ENCODE measurements at regions of chr1 and their contacts with region 1.

Region 1: GRCh38 chr1:203038891-203039608 is 12.8 kb downstream of the PPFIA4 start:
- DNase-seq: peak; percentile 89

Region 2: GRCh38 chr1:202905331-202905730 is 133.7 kb before region 1 on chr1:
- intact Hi-C with region 1: no loop called
- DNase-seq: no peak

Region 3: GRCh38 chr1:203069030-203069747 is 30.1 kb after region 1 on chr1:
- intact Hi-C with region 1: loop called (anchors 2 kb)
- DNase-seq: no peak

Region 4: DNA sequence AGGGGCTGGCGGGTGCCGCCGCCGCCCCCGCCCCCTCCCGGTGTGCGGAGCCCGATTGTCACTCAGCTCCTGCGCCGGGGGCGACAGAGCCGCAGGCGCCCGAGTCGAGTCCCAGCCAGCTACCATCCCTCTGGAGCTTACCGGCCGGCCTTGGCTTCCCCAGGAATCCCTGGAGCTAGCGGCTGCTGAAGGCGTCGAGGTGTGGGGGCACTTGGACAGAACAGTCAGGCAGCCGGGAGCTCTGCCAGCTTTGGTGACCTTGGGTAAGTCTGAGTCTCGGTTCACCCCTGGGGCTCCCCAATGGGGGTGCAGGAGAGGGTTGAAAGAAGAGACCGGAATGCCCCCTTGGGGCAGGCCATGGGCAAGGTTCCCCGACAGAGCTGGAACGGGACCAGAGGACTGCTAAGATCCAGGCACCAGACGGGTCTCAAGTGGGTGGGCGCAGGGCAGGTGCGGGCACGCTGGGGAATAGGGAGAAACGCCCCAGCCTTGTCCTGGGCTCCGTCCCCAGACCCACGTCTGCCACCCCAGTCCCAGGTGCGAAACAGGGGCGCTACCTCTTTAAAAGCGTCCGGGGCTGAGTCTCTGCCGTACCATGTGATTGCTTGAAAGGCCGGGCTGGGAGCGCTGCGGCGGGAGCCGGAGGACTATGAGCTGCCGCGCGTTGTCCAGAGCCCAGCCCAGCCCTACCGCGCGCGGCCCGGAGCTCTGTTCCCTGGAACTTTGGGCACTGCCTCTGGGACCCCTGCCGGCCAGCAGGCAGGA is 88.8 kb after region 1 on chr1 and contains the start of gene ADORA1:
- intact Hi-C with region 1: loop called (anchors 1 kb)
- DNase-seq: peak; percentile 82
- total RNA-seq, gene ADORA1: 12.1 TPM

Region 5: GRCh38 chr1:203172128-203173010 is 133.3 kb after region 1 on chr1:
- intact Hi-C with region 1: loop called (anchors 1 kb)
- DNase-seq: peak; percentile 86

Region 6: DNA sequence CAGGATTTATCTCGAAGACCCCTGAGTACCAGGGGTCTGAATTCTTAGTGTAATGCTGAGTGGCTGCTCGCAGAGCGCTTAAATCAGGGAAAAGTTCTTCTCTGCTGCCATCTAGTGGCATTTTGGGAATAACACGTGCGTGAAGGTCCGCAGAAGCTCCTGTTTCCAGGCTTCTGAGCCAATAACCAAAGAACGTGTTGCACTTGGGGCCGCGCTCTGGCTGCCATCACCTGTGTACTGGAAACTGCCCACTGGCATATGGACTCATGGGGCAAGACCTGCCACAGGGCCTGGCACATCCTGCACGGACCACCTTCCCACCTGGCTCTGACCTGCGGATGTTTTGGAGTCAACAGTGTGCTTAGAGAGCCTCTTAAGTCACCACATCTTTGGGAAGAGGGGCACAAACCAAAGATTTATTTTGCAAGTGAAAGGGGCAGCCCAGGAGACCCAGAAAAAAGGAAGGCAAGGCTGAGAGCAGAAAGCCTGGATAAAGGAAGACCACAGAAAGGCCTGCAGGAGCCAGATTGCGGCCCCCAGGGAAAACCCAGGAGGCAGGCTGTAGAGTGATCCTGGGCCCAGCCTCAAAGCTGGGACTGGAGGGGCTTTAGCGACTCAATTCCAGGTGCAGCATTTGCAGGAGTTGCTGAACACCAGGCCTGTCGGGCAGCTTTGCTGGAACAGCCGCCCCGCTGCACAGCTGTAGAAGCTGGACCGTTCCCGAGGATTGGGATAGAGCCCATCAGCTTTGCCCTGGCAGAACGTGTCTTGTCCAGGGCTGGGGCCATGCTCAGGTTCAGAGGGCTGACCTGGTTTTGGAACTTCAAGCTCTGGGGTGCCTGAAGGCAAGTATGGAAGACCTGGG is 177.5 kb after region 1 on chr1:
- intact Hi-C with region 1: loop called (anchors 1 kb)
- DNase-seq: no peak

Region 7: DNA sequence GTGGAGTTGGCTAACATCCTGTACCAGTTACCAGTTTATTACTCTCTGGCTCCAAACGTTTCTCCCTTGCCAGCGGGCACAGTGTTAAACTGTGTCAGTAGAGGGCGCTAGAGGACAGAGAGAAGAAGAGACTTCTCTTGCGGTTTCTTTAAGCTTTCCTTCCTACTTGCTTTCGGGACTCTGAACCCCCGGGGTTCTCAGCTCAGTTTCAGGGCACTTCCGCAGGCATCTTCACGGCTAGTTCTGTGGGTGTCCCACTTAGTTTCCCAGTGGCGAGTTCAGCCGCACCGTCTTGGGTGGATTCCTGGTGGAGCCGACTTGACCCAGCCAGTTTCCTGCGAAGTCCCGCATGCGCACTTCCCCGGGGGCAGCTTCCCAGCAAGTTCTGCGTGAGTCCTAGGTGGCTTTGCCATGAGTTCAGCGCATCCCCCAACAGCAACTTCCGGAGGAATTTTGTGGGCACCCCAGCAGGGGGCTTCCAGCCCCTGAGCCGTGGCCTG is 228.3 kb after region 1 on chr1:
- intact Hi-C with region 1: loop called (anchors 2 kb)
- DNase-seq: peak; percentile 89

Region 8: DNA sequence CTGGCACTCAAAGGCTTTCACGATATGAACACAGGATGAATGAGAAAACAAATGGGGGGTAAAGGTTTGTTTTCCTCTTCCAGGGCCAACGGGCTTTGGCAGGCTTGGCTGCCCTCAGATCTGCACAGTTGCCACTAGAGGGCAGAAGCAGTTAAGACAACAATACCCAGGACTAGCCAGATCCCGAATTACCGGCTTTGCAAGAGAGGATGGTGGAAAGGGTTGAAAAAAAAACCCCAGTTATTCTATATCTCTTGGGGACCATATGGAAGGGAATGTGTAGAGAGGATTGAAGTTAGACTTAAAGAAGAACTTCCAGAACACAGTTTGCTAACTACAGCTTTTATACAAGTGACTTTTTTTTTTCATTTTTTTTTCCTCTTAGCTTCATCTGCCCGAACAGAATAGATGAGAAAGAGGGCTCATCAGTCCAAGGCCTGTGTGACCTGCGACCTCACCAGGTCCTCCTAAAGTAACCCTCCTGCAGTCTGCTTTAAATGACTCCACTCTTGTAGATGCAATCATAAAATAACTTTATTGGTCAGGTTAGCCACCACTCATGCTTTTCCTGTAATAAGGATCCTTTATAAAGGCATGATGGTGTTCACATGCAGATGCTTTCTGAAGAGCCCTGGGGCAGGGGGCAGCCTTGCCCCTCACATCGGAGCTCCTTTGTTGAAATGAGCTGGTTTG is 301.2 kb after region 1 on chr1:
- intact Hi-C with region 1: loop called (anchors 10 kb)
- DNase-seq: peak; percentile 83